Sigmoid colon (tissue), 7 donors: ENCODE measurements at regions of chr6 and their contacts with region 1.

Region 1: GRCh38 chr6:5025911-5026819 is 22.3 kb upstream of the RPP40 start:
- DNase-seq: peak; percentile 91
- H3K4me3 ChIP-seq: peak overlapping the region; percentile 50 to 60 (median 60)
- H3K27ac ChIP-seq: peak overlapping the region; percentile 88 to 93 (median 92)
- H3K4me1 ChIP-seq: peaks cover 0 to 21% (median 16%) of the 10 kb centered on the region in 4 donors
- H3K27me3 ChIP-seq: no peaks in the 10 kb centered on the region
- CTCF ChIP-seq: no peak
- EP300 ChIP-seq: no peak
- POLR2A ChIP-seq: peak; percentile 56 to 70

Region 2: DNA sequence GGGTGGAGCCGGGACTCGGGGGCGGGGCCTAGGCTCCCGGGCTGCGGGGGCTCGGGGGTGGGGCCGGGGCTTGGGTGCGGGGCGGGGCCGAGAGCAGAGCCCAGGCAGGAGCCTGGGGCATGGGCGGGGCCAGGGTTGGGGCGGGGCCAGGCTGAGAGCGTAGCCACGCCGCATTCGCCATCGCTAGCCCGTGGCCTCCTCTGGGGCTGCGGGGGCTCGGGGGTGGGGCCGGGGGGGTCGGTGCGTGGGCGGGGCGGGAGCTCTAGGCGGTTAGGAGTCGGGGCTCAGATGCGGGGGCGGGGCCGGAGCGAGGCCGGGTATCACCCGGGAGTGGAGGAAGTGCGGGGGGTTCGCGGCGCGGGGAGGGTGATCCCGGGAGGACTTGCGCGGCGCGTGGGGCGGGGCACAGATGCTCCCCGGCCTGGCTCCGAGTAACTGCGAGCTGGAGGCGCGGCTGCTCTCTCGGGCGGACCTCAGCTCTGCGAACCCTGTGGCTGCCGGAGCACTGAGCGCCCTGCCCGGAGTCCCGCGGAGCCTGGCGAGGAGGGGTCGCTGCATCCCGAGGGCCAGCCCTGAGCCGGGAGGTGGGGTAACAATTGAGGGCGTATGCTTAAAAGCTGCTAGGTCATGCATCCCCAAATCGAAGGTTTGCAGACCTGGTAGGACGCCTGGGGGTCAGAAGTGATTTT is 890.4 kb before region 1 on chr6:
- intact Hi-C with region 1: loop called (anchors 10 kb)
- DNase-seq: peak; percentile 100
- H3K4me3 ChIP-seq: peak overlapping the region; percentile 66 to 93 (median 80)
- H3K27ac ChIP-seq: peak overlapping the region; percentile 90 to 97 (median 93)
- H3K4me1 ChIP-seq: peaks cover 0 to 24% (median 21%) of the 10 kb centered on the region in 4 donors
- H3K27me3 ChIP-seq: no peaks in the 10 kb centered on the region
- CTCF ChIP-seq: peak in 1 of 4 experiments; percentile 9
- EP300 ChIP-seq: no peak
- POLR2A ChIP-seq: peak in 1 of 2 donors; percentile 22

Region 3: GRCh38 chr6:4351520-4352315 is 674.4 kb before region 1 on chr6:
- intact Hi-C with region 1: loop called (anchors 5 kb)
- DNase-seq: peak; percentile 93
- H3K4me3 ChIP-seq: peak overlapping the region in 2 of 4 donors; percentile 13 to 28
- H3K27ac ChIP-seq: peak overlapping the region; percentile 82 to 88 (median 84)
- H3K4me1 ChIP-seq: peaks cover 0 to 56% (median 53%) of the 10 kb centered on the region in 4 donors
- H3K27me3 ChIP-seq: no peaks in the 10 kb centered on the region
- CTCF ChIP-seq: no peak
- EP300 ChIP-seq: peak in 3 of 4 donors; percentile 4 to 75 (median 42)
- POLR2A ChIP-seq: no peak

Region 4: GRCh38 chr6:4647414-4648365 is 378.5 kb before region 1 on chr6:
- intact Hi-C with region 1: loop called (anchors 5 kb)
- DNase-seq: peak; percentile 93
- H3K4me3 ChIP-seq: peak overlapping the region; percentile 22 to 50 (median 40)
- H3K27ac ChIP-seq: peak overlapping the region in 3 of 4 donors; percentile 64 to 69 (median 65)
- H3K4me1 ChIP-seq: peaks cover 0 to 11% (median 5%) of the 10 kb centered on the region in 4 donors
- H3K27me3 ChIP-seq: no peaks in the 10 kb centered on the region
- CTCF ChIP-seq: no peak
- EP300 ChIP-seq: peak in 2 of 4 donors; percentile 50 to 84
- POLR2A ChIP-seq: peak in 1 of 2 donors; percentile 13

Region 5: GRCh38 chr6:4973982-4974745 is 52.0 kb before region 1 on chr6:
- intact Hi-C with region 1: loop called (anchors 5 kb)
- DNase-seq: peak; percentile 74
- H3K4me3 ChIP-seq: no peak overlapping the region
- H3K27ac ChIP-seq: peak overlapping the region; percentile 38 to 77 (median 74)
- H3K4me1 ChIP-seq: peaks cover 0 to 41% (median 21%) of the 10 kb centered on the region in 4 donors
- H3K27me3 ChIP-seq: no peaks in the 10 kb centered on the region
- CTCF ChIP-seq: no peak
- EP300 ChIP-seq: no peak
- POLR2A ChIP-seq: no peak

Region 6: GRCh38 chr6:5003604-5004372 is 22.4 kb before region 1 on chr6 and contains the start of gene RPP40:
- intact Hi-C with region 1: loop called (anchors 2 kb)
- DNase-seq: peak; percentile 98
- H3K4me3 ChIP-seq: peak within 1 kb of the TSS; percentile 47 to 67 (median 58)
- H3K27ac ChIP-seq: peak within 1 kb of the TSS; percentile 89 to 96 (median 91)
- H3K4me1 ChIP-seq: peaks cover 0 to 8% (median 7%) of the 10 kb centered on the region in 4 donors
- H3K27me3 ChIP-seq: no peaks in the 10 kb centered on the region
- CTCF ChIP-seq: peak; percentile 56 to 94 (median 90)
- EP300 ChIP-seq: no peak
- POLR2A ChIP-seq: no peak
- total RNA-seq, gene RPP40: 4.2 to 9.7 (median 7.2) TPM